Right ventricle myocardium inferior (tissue), 1 donor: ENCODE measurements at regions of chr2 and their contacts with region 1.

Region 1: GRCh38 chr2:192162392-192163042 is 32.2 kb downstream of the TMEFF2 start:
- DNase-seq: no peak
- ATAC-seq: peak; percentile 75

Region 2: DNA sequence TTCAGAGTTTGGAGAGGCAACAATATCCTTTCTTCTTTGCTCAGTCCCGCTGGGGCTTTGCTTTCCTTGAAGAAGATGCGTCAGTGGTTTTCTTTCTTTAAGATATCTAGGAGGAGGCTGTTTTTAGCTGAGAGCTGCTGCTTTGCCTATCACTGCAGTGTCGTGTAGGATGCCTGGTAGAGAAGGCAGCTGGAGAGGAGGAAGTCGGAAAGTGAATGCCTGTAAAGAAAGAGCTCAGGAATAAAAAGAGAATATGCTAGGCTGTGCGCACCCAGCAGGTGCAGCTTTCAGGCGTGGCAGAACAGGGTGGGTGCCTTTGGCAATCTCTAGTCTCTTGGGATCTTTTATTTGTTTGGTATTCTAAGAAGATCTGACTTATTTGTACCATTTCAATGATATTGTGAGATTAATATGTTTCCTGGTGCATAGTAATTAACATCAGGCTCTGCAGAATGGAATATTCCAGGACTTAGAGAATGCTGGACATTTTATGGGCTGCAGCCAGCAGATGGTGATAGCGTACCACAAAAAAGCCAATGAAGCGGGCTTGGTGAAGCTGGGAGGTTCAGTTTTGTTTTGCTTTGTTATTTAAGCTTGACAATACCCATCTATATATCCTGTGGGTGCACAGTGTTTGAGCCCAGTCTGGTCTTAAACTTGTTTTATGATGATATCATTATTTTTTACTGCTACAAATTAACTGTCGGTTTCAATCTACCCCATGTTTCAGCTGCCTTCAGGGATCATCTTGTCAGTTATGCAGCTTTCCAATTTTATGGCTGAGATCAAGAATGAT is 350.5 kb before region 1 on chr2:
- intact Hi-C with region 1: loop called (anchors 1 kb)
- DNase-seq: no peak
- ATAC-seq: peak; percentile 83

Region 3: DNA sequence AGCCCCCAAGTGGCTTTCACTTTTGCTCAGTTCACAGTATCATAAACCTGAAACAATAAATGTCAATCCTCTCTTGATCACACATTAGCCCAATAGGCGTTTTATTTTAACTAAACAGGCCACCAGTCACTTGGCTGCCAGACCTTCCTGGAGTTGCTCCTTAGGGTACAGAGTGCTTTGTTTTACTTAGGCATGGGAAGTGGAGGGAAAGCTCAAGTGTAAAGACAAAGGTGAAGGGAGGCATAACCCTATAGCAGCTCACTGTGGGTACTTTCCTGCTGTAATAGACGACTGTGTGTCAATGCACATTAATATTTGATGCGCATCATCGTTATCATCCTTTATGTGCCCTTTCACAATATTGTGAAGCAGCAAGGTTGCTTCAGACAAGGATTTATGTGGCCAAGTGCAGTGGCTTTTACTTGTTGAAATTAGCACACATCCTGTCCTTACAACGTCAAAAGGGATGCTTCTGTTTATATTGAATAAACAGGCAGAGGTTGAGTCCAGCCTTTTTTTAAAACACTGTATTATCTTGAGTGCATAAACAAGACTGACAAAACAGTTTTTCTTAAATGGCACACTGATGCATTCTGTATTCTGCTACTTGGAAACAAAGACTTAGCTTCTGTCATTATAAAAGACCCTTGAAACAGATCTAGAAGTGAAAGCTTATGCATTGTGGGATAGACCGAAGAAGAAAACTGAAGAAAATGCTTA is 136.3 kb before region 1 on chr2:
- intact Hi-C with region 1: no loop called
- DNase-seq: no peak
- ATAC-seq: no peak

Region 4: GRCh38 chr2:192215096-192215877 is 52.8 kb after region 1 on chr2:
- intact Hi-C with region 1: no loop called
- DNase-seq: no peak
- ATAC-seq: no peak

Region 5: GRCh38 chr2:192544371-192544955 is 381.9 kb after region 1 on chr2:
- intact Hi-C with region 1: no loop called
- DNase-seq: no peak
- ATAC-seq: no peak

Region 6: GRCh38 chr2:193751299-193751698 is 1588.8 kb after region 1 on chr2:
- intact Hi-C with region 1: no loop called
- DNase-seq: no peak
- ATAC-seq: no peak